ENCODE measurements at regions of chr11 and their contacts with region 1.

Region 1: DNA sequence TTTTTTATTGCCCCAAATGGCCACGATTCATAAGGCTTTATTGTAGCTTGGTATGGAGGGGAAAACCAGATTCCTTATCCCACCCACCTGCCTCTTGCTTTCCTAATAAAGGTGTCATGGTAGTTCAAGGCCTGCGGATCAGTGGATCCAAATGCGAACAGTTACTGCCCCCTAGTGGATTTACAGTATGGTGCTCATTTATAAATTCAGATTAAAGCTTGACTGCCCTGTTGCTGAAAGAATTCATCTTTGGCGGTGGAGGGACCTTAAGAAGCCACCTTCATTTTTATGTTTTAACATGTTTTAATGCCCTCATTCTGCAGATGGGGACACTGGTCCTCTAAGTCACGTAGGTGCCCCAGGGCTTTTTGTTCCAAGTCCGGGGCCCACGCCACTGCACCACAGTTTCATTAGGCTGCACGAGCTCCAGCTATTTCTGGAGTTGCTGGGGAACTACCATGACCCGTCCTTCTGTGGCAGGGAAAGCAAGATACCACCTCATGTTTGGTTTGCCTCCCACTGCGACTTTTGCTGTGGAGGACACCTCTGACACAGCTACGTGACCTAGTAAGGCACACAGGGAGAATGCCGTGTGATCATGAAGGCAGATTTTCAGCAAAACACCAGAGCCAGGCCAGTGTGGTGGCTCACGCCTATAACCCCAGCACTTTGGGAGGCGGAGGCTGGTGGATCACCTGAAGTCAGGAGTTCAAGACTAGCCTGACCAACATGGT is 15.6 kb upstream of the INCENP start:
- DNase-seq: peak in 7 of 9 donors; percentile 56 to 76 (median 69)
- ATAC-seq: peak; percentile 78
- H3K4me3 ChIP-seq: no peak overlapping the region
- H3K4me3 Mint-ChIP-seq: peak overlapping the region in 1 of 10 donors; percentile 38
- H3K27ac ChIP-seq: no peak overlapping the region
- H3K27ac Mint-ChIP-seq: peak overlapping the region in 3 of 9 donors; percentile 48 to 81 (median 80)
- H3K4me1 ChIP-seq: peaks cover 6 to 7% of the 10 kb centered on the region in 2 donors
- H3K4me1 Mint-ChIP-seq: peaks cover 6 to 27% (median 16%) of the 10 kb centered on the region in 7 donors
- H3K27me3 ChIP-seq: no peaks in the 10 kb centered on the region
- H3K27me3 Mint-ChIP-seq: peaks cover 0 to 15% (median 4%) of the 10 kb centered on the region in 5 donors

Region 2: GRCh38 chr11:61679893-61680621 is 428.1 kb before region 1 on chr11 and contains the start of gene DAGLA:
- CTCF ChIA-PET with region 1: no interaction called
- POLR2A ChIA-PET with region 1: no interaction called
- intact Hi-C with region 1: loop called in 1 of 2 experiments (anchors 5 kb)
- DNase-seq: peak; percentile 60 to 91 (median 74)
- ATAC-seq: peak; percentile 89
- H3K4me3 ChIP-seq: no peak within 1 kb of the TSS
- H3K4me3 Mint-ChIP-seq: peak within 1 kb of the TSS in 9 of 10 donors; percentile 38 to 77 (median 67)
- H3K27ac ChIP-seq: no peak within 1 kb of the TSS
- H3K27ac Mint-ChIP-seq: peak within 1 kb of the TSS in 4 of 9 donors; percentile 43 to 65 (median 55)
- H3K4me1 ChIP-seq: peaks cover 14 to 16% of the 10 kb centered on the region in 2 donors
- H3K4me1 Mint-ChIP-seq: peaks cover 0 to 9% (median 5%) of the 10 kb centered on the region in 7 donors
- H3K27me3 ChIP-seq: peaks cover 0 to 3% of the 10 kb centered on the region in 2 donors
- H3K27me3 Mint-ChIP-seq: peaks cover 2 to 27% (median 21%) of the 10 kb centered on the region in 5 donors
- total RNA-seq, gene DAGLA: 0.15 to 2.1 (median 0.35) TPM

Region 3: DNA sequence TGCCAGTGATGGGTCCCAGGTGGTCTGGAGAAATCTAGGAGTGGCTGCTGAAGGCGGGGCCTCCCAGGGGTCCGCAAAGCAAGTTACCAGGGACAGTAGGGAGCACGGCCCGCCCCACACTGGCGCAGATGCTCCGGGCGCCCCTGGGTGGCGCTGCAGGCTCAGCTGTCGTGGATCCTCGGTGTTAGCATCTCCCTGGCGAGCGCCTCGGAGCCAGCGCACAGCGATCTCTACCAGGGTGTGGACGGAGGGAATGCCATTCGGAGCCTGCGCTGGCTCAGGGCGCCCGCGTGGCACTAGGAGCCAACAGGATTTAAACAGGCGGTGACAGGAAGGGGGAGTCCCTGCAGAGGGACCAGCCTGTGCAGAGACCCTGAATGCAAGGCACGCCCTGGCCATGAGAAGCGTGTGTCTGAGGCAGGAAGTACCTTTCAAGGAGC is 237.0 kb before region 1 on chr11:
- CTCF ChIA-PET with region 1: interaction called, 3 read pairs
- POLR2A ChIA-PET with region 1: no interaction called
- intact Hi-C with region 1: loop called (anchors 1 kb)
- DNase-seq: peak; percentile 23 to 77 (median 50)
- ATAC-seq: peak; percentile 94
- H3K4me3 ChIP-seq: no peak overlapping the region
- H3K4me3 Mint-ChIP-seq: peak overlapping the region; percentile 34 to 87 (median 70)
- H3K27ac ChIP-seq: no peak overlapping the region
- H3K27ac Mint-ChIP-seq: peak overlapping the region in 3 of 9 donors; percentile 43 to 52 (median 46)
- H3K4me1 ChIP-seq: no peaks in the 10 kb centered on the region
- H3K4me1 Mint-ChIP-seq: peaks cover 0 to 8% (median 5%) of the 10 kb centered on the region in 7 donors
- H3K27me3 ChIP-seq: no peaks in the 10 kb centered on the region
- H3K27me3 Mint-ChIP-seq: peaks cover 0 to 8% (median 0%) of the 10 kb centered on the region in 5 donors

Region 4: GRCh38 chr11:62025487-62026105 is 82.6 kb before region 1 on chr11:
- CTCF ChIA-PET with region 1: no interaction called
- POLR2A ChIA-PET with region 1: no interaction called
- intact Hi-C with region 1: loop called in 1 of 2 experiments (anchors 1 kb)
- DNase-seq: peak; percentile 45 to 97 (median 93)
- ATAC-seq: peak; percentile 91
- H3K4me3 ChIP-seq: peak overlapping the region; percentile 11
- H3K4me3 Mint-ChIP-seq: peak overlapping the region; percentile 68 to 84 (median 76)
- H3K27ac ChIP-seq: peak overlapping the region; percentile 93
- H3K27ac Mint-ChIP-seq: peak overlapping the region; percentile 95 to 100 (median 99)
- H3K4me1 ChIP-seq: peaks cover 9 to 17% of the 10 kb centered on the region in 2 donors
- H3K4me1 Mint-ChIP-seq: peaks cover 6 to 28% (median 24%) of the 10 kb centered on the region in 7 donors
- H3K27me3 ChIP-seq: no peaks in the 10 kb centered on the region
- H3K27me3 Mint-ChIP-seq: no peaks in the 10 kb centered on the region

Region 5: GRCh38 chr11:62069986-62070919 is 37.9 kb before region 1 on chr11:
- CTCF ChIA-PET with region 1: no interaction called
- POLR2A ChIA-PET with region 1: no interaction called
- intact Hi-C with region 1: no loop called
- DNase-seq: no peak
- ATAC-seq: no peak
- H3K4me3 ChIP-seq: no peak overlapping the region
- H3K4me3 Mint-ChIP-seq: no peak overlapping the region
- H3K27ac ChIP-seq: no peak overlapping the region
- H3K27ac Mint-ChIP-seq: no peak overlapping the region
- H3K4me1 ChIP-seq: no peaks in the 10 kb centered on the region
- H3K4me1 Mint-ChIP-seq: no peaks in the 10 kb centered on the region
- H3K27me3 ChIP-seq: no peaks in the 10 kb centered on the region
- H3K27me3 Mint-ChIP-seq: peaks cover 0 to 7% (median 0%) of the 10 kb centered on the region in 5 donors

Region 6: DNA sequence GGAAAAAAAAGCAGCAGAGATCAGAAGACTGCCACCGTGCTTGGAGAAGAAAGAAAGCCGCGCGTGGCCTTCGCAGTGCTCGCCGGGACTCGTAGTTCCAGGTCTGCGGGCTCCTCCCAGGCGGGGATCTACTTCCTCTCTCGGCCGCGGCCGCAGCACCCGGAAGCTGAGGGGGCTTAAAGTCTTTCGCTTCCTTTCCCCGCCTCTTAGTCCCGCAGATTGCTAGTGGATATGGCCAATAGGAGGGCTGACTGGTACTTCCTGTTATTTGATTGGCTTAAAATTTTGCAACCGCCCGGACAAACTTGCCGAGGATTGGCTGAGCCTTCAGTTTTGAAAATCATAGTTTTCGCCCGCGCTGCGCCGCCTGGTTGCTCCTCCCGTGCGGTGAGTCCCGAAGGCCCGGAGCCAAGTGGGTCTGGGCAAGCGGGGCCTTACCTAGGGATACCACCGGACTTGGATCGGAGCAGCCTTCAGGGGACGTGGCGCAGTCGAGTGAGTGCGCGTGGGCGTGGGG is 15.5 kb after region 1 on chr11 and contains the start of gene INCENP:
- CTCF ChIA-PET with region 1: no interaction called
- POLR2A ChIA-PET with region 1: interaction called, 3 read pairs
- intact Hi-C with region 1: loop called (anchors 1 kb)
- DNase-seq: peak; percentile 75 to 97 (median 95)
- ATAC-seq: peak; percentile 100
- H3K4me3 ChIP-seq: peak within 1 kb of the TSS; percentile 87
- H3K4me3 Mint-ChIP-seq: peak within 1 kb of the TSS; percentile 89 to 95 (median 94)
- H3K27ac ChIP-seq: peak within 1 kb of the TSS; percentile 81
- H3K27ac Mint-ChIP-seq: peak within 1 kb of the TSS; percentile 53 to 95 (median 91)
- H3K4me1 ChIP-seq: peaks cover 6 to 9% of the 10 kb centered on the region in 2 donors
- H3K4me1 Mint-ChIP-seq: peaks cover 22 to 40% (median 28%) of the 10 kb centered on the region in 7 donors
- H3K27me3 ChIP-seq: no peaks in the 10 kb centered on the region
- H3K27me3 Mint-ChIP-seq: peaks cover 0 to 15% (median 0%) of the 10 kb centered on the region in 5 donors
- total RNA-seq, gene INCENP: 18.6 to 124 (median 25.6) TPM

Region 7: DNA sequence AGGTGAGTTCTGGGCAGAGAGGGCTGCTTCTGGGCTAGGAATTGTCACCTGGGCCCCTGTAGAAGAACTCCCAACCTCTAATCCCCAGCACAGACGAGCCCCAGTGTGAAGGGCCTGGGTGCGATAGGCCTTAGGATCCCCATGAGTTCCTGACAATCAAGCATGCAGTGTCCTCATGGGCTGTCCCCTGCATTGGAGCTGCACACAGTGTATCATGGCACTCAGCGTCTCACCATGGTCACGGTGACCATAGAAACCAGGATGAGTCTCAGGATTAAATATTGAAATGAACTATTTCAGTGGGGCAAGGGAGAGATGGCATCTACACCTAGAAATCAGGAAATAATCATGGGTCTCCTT is 100.6 kb after region 1 on chr11:
- CTCF ChIA-PET with region 1: no interaction called
- POLR2A ChIA-PET with region 1: no interaction called
- intact Hi-C with region 1: no loop called
- DNase-seq: no peak
- ATAC-seq: no peak
- H3K4me3 ChIP-seq: no peak overlapping the region
- H3K4me3 Mint-ChIP-seq: no peak overlapping the region
- H3K27ac ChIP-seq: no peak overlapping the region
- H3K27ac Mint-ChIP-seq: no peak overlapping the region
- H3K4me1 ChIP-seq: no peaks in the 10 kb centered on the region
- H3K4me1 Mint-ChIP-seq: no peaks in the 10 kb centered on the region
- H3K27me3 ChIP-seq: no peaks in the 10 kb centered on the region
- H3K27me3 Mint-ChIP-seq: peaks cover 5 to 17% (median 11%) of the 10 kb centered on the region in 5 donors